ENCODE measurements at regions of chrX and their contacts with region 1.

Region 1: DNA sequence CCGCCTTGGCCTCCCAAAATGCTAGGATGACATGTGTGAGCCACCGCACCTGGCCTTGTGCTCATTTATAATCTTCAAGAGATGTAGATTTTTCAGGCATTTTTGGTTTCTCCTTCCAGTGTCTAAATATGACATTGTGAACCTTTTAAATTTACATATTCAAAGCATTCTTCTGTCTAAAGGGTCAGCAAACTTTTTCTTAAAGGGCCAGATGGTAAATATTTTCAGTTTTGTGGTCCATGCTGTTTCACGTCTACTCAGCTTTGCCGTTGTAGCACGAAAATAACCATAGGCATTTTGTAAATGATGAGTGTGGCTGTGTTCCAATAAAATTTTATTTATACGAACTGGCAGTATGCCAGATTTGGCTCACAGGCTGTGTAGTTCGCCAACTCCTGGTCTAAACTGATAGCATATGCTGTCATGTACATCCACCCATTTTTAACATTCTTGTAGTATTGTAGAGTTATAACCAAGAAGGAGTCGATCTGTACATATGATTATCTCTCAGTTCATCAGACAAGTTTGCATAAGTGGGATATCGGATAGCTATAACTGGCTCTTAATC is 12.7 kb upstream of the GCNA start:
- DNase-seq: no peak
- ATAC-seq: no peak
- H3K4me3 ChIP-seq: no peak overlapping the region
- H3K4me3 Mint-ChIP-seq: no peak overlapping the region
- H3K27ac ChIP-seq: no peak overlapping the region
- H3K27ac Mint-ChIP-seq: no peak overlapping the region
- H3K4me1 ChIP-seq: no peaks in the 10 kb centered on the region
- H3K4me1 Mint-ChIP-seq: peaks cover 15% of the 10 kb centered on the region
- H3K27me3 ChIP-seq: no peaks in the 10 kb centered on the region
- H3K27me3 Mint-ChIP-seq: no peaks in the 10 kb centered on the region
- CTCF ChIP-seq: no peak

Region 2: GRCh38 chrX:71378732-71379131 is 186.8 kb before region 1 on chrX:
- CTCF ChIA-PET with region 1: no interaction called
- POLR2A ChIA-PET with region 1: no interaction called
- intact Hi-C with region 1: loop called in 1 of 2 experiments (anchors 10 kb)
- DNase-seq: no peak
- ATAC-seq: no peak
- H3K4me3 ChIP-seq: no peak overlapping the region
- H3K4me3 Mint-ChIP-seq: no peak overlapping the region
- H3K27ac ChIP-seq: no peak overlapping the region
- H3K27ac Mint-ChIP-seq: no peak overlapping the region
- H3K4me1 ChIP-seq: no peaks in the 10 kb centered on the region
- H3K4me1 Mint-ChIP-seq: peaks cover 4% of the 10 kb centered on the region
- H3K27me3 ChIP-seq: no peaks in the 10 kb centered on the region
- H3K27me3 Mint-ChIP-seq: no peaks in the 10 kb centered on the region
- CTCF ChIP-seq: no peak